ENCODE measurements at regions of chr11 and their contacts with region 1.

Region 1: GRCh38 chr11:62787005-62787759 is at the start of gene TMEM179B:
- DNase-seq: peak; percentile 90 to 99 (median 97)
- ATAC-seq: peak; percentile 61
- H3K4me3 ChIP-seq: peak within 1 kb of the TSS; percentile 77
- H3K4me3 Mint-ChIP-seq: peak within 1 kb of the TSS; percentile 98
- H3K27ac ChIP-seq: peak within 1 kb of the TSS; percentile 80 to 92
- H3K27ac Mint-ChIP-seq: peak within 1 kb of the TSS; percentile 98
- H3K4me1 ChIP-seq: peaks cover 53% of the 10 kb centered on the region
- H3K4me1 Mint-ChIP-seq: peaks cover 55% of the 10 kb centered on the region
- H3K27me3 ChIP-seq: no peaks in the 10 kb centered on the region
- H3K27me3 Mint-ChIP-seq: no peaks in the 10 kb centered on the region
- CTCF ChIP-seq: no peak
- total RNA-seq, gene TMEM179B: 34.7 to 37.4 TPM

Region 2: GRCh38 chr11:62324738-62325556 is 462.2 kb before region 1 on chr11:
- CTCF ChIA-PET with region 1: no interaction called
- POLR2A ChIA-PET with region 1: no interaction called
- intact Hi-C with region 1: no loop called
- DNase-seq: peak in 12 of 14 experiments; percentile 8 to 80 (median 47)
- ATAC-seq: peak; percentile 85
- H3K4me3 ChIP-seq: no peak overlapping the region
- H3K4me3 Mint-ChIP-seq: no peak overlapping the region
- H3K27ac ChIP-seq: no peak overlapping the region
- H3K27ac Mint-ChIP-seq: no peak overlapping the region
- H3K4me1 ChIP-seq: peaks cover 4% of the 10 kb centered on the region
- H3K4me1 Mint-ChIP-seq: no peaks in the 10 kb centered on the region
- H3K27me3 ChIP-seq: peaks cover 0 to 2% of the 10 kb centered on the region in 2 experiments
- H3K27me3 Mint-ChIP-seq: peaks cover 26% of the 10 kb centered on the region
- CTCF ChIP-seq: peak; percentile 37

Region 3: GRCh38 chr11:62705880-62706849 is 81.0 kb before region 1 on chr11:
- CTCF ChIA-PET with region 1: interaction called, 7 read pairs
- POLR2A ChIA-PET with region 1: interaction called, 18 read pairs
- intact Hi-C with region 1: no loop called
- DNase-seq: peak; percentile 90 to 97 (median 94)
- ATAC-seq: peak; percentile 62
- H3K4me3 ChIP-seq: peak overlapping the region; percentile 79
- H3K4me3 Mint-ChIP-seq: peak overlapping the region; percentile 86
- H3K27ac ChIP-seq: peak overlapping the region; percentile 65 to 84
- H3K27ac Mint-ChIP-seq: peak overlapping the region; percentile 92
- H3K4me1 ChIP-seq: peaks cover 49% of the 10 kb centered on the region
- H3K4me1 Mint-ChIP-seq: peaks cover 42% of the 10 kb centered on the region
- H3K27me3 ChIP-seq: no peaks in the 10 kb centered on the region
- H3K27me3 Mint-ChIP-seq: no peaks in the 10 kb centered on the region
- CTCF ChIP-seq: no peak

Region 4: GRCh38 chr11:62799486-62799885 is 12.3 kb after region 1 on chr11:
- CTCF ChIA-PET with region 1: interaction called, 32 read pairs
- POLR2A ChIA-PET with region 1: interaction called, 18 read pairs
- intact Hi-C with region 1: no loop called
- DNase-seq: no peak
- ATAC-seq: no peak
- H3K4me3 ChIP-seq: no peak overlapping the region
- H3K4me3 Mint-ChIP-seq: no peak overlapping the region
- H3K27ac ChIP-seq: no peak overlapping the region
- H3K27ac Mint-ChIP-seq: no peak overlapping the region
- H3K4me1 ChIP-seq: peaks cover 24% of the 10 kb centered on the region
- H3K4me1 Mint-ChIP-seq: peaks cover 22% of the 10 kb centered on the region
- H3K27me3 ChIP-seq: no peaks in the 10 kb centered on the region
- H3K27me3 Mint-ChIP-seq: no peaks in the 10 kb centered on the region
- CTCF ChIP-seq: no peak

Region 5: DNA sequence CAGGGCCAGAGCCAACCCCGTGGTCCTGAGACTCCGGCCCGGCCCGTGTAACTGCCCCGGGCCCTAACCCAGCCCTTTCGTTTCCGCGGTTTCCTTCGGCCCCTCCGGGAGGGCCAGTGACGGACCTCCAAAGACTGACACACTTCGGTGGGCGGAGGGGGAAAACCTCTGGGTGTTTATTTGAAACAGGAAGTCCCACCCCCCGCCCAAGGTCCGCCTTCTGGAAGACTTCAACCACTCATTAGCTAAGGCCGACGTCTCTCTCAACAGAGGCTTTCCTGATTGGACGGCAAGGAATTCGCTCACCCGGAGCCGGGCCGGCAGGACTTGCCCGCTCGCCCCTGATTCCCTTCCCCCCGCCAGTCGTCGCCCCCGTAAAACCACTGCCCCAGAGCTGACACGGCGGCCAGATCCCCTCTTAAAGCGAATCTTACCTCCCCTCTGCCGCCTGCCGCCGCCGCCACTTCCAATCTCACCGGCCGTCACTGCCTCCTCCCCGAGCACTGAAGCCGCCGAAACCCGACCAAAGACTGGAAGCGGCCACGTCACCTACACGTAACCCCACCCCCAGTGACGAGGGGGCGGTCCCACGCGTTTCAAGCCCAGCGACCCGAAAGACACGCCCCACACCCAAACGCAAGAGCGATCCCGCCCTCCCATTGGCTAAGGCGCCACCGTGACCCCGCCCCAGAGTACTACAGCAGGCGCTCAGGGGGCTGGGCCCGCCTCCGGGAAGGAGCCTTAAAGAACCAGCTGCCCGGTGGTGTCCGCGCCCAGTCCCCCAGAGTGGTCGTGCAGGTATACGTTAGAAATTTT is 44.5 kb after region 1 on chr11 and contains the start of gene STX5:
- CTCF ChIA-PET with region 1: interaction called, 41 read pairs
- POLR2A ChIA-PET with region 1: interaction called, 41 read pairs
- intact Hi-C with region 1: loop called (anchors 2 kb)
- DNase-seq: peak; percentile 99 to 100 (median 99)
- ATAC-seq: peak; percentile 95
- H3K4me3 ChIP-seq: peak within 1 kb of the TSS; percentile 86
- H3K4me3 Mint-ChIP-seq: peak within 1 kb of the TSS; percentile 92
- H3K27ac ChIP-seq: peak within 1 kb of the TSS; percentile 95 to 97
- H3K27ac Mint-ChIP-seq: peak within 1 kb of the TSS; percentile 95
- H3K4me1 ChIP-seq: peaks cover 44% of the 10 kb centered on the region
- H3K4me1 Mint-ChIP-seq: peaks cover 40% of the 10 kb centered on the region
- H3K27me3 ChIP-seq: no peaks in the 10 kb centered on the region
- H3K27me3 Mint-ChIP-seq: no peaks in the 10 kb centered on the region
- CTCF ChIP-seq: no peak
- total RNA-seq, gene STX5: 93.1 to 104 TPM

Region 6: DNA sequence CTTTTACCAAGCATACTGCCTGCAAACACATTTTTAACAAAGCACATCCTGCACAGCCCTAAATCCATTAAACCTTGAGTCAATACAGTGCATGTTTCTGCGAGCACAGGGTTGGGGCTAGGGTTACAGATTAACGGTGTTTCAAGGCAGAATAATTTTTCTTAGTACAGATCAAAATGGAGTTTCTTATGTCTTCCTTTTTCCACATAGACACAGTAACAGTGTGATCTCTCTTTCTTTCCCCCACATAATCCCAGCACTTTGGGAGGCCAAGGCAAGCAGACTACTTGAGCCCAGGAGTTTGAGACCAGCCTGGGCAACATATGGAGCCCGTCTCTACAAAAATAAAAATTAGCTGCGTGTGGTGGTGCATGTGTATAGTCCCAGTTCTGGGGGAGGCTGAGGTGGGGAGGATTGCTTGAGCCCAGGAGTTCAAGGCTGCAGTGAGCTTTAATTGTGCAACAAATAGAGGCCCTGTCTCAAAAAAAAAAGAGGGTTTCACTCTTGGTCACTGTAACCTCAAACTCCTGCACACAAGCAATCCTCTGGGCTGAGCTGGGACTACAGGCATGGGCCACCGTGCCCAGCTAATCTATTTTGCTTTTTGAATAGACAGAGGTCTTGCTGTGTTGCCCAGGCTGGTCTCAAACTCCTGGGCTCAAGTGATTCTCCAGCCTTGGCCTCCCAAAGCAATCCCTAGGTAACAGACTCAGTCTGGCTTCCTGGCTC is 73.8 kb after region 1 on chr11:
- CTCF ChIA-PET with region 1: interaction called, 58 read pairs
- POLR2A ChIA-PET with region 1: interaction called, 158 read pairs
- intact Hi-C with region 1: loop called (anchors 1 kb)
- DNase-seq: no peak
- ATAC-seq: no peak
- H3K4me3 ChIP-seq: no peak overlapping the region
- H3K4me3 Mint-ChIP-seq: no peak overlapping the region
- H3K27ac ChIP-seq: no peak overlapping the region
- H3K27ac Mint-ChIP-seq: no peak overlapping the region
- H3K4me1 ChIP-seq: peaks cover 18% of the 10 kb centered on the region
- H3K4me1 Mint-ChIP-seq: peaks cover 18% of the 10 kb centered on the region
- H3K27me3 ChIP-seq: no peaks in the 10 kb centered on the region
- H3K27me3 Mint-ChIP-seq: no peaks in the 10 kb centered on the region
- CTCF ChIP-seq: no peak

Region 7: GRCh38 chr11:62905927-62906531 is 118.8 kb after region 1 on chr11:
- CTCF ChIA-PET with region 1: no interaction called
- POLR2A ChIA-PET with region 1: no interaction called
- intact Hi-C with region 1: no loop called
- DNase-seq: peak; percentile 60 to 87 (median 74)
- ATAC-seq: peak; percentile 80
- H3K4me3 ChIP-seq: no peak overlapping the region
- H3K4me3 Mint-ChIP-seq: no peak overlapping the region
- H3K27ac ChIP-seq: no peak overlapping the region
- H3K27ac Mint-ChIP-seq: no peak overlapping the region
- H3K4me1 ChIP-seq: peaks cover 7% of the 10 kb centered on the region
- H3K4me1 Mint-ChIP-seq: no peaks in the 10 kb centered on the region
- H3K27me3 ChIP-seq: peaks cover 0 to 7% of the 10 kb centered on the region in 2 experiments
- H3K27me3 Mint-ChIP-seq: peaks cover 18% of the 10 kb centered on the region
- CTCF ChIP-seq: peak; percentile 96

Measured in CD4-positive, alpha-beta T cell (primary cell).